Activated naive CD4-positive, alpha-beta T cell treated with anti-CD3 and anti-CD28 coated beads for 36 hours (primary cell): ENCODE measurements at regions of chr11 and their contacts with region 1.

Region 1: GRCh38 chr11:111601979-111602864 is at the start of gene SIK2:
- DNase-seq: peak; percentile 91
- H3K4me3 Mint-ChIP-seq: peak within 1 kb of the TSS; percentile 78
- H3K27ac Mint-ChIP-seq: peak within 1 kb of the TSS; percentile 83
- H3K4me1 Mint-ChIP-seq: peaks cover 24% of the 10 kb centered on the region
- H3K27me3 Mint-ChIP-seq: no peaks in the 10 kb centered on the region
- total RNA-seq, gene SIK2: 3.5 to 3.8 TPM

Region 2: DNA sequence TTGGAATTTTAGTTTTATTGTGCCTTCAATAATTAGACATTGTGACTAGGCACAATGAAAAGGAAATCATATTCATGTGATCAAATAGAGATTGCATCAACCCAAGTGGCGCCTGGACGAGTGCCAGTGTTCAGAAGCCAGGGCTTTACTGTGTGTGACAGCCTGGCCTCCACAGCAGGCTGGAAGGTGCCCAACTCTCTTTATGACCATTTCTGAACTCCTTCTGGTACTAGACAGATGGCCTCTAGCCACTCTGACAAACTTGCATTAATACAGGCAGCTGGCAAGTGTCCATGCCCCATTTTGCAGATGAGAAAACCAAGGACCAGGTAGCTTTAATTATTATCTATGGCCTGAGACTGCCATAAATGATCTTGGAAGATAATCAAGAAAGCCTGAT is 214.9 kb before region 1 on chr11:
- CTCF ChIA-PET with region 1: no interaction called
- intact Hi-C with region 1: no loop called
- DNase-seq: no peak
- H3K4me3 Mint-ChIP-seq: no peak overlapping the region
- H3K27ac Mint-ChIP-seq: no peak overlapping the region
- H3K4me1 Mint-ChIP-seq: peaks cover 12% of the 10 kb centered on the region
- H3K27me3 Mint-ChIP-seq: no peaks in the 10 kb centered on the region

Region 3: DNA sequence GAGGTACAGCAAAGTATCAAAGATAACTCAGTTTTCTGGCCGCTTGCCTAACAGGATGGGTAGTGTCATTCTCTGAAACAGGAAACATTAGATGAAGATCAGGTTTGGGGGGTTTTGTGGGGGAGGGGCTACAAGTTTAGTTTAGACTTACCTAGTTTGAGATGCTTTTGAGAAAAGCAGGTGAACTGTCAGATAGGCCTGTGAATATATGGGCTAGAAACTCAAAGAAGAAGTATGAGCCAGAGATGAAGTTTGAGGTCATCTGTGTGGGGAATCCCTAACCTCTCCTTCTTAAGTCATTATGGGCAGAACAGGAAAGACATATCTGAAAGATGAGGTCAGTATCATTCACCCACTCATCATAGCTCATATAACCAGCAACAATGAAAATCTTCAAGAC is 75.7 kb before region 1 on chr11:
- CTCF ChIA-PET with region 1: no interaction called
- intact Hi-C with region 1: loop called (anchors 1 kb)
- DNase-seq: peak; percentile 81
- H3K4me3 Mint-ChIP-seq: no peak overlapping the region
- H3K27ac Mint-ChIP-seq: peak overlapping the region; percentile 67
- H3K4me1 Mint-ChIP-seq: peaks cover 72% of the 10 kb centered on the region
- H3K27me3 Mint-ChIP-seq: peaks cover 3% of the 10 kb centered on the region

Region 4: GRCh38 chr11:111574373-111575225 is 27.6 kb before region 1 on chr11:
- CTCF ChIA-PET with region 1: no interaction called
- intact Hi-C with region 1: no loop called
- DNase-seq: peak; percentile 12
- H3K4me3 Mint-ChIP-seq: peak overlapping the region; percentile 30
- H3K27ac Mint-ChIP-seq: no peak overlapping the region
- H3K4me1 Mint-ChIP-seq: no peaks in the 10 kb centered on the region
- H3K27me3 Mint-ChIP-seq: no peaks in the 10 kb centered on the region

Region 5: GRCh38 chr11:111766093-111766833 is 164.0 kb after region 1 on chr11 and contains the start of gene PPP2R1B:
- CTCF ChIA-PET with region 1: interaction called, 15 read pairs
- intact Hi-C with region 1: loop called (anchors 1 kb)
- DNase-seq: peak; percentile 78
- H3K4me3 Mint-ChIP-seq: peak within 1 kb of the TSS; percentile 100
- H3K27ac Mint-ChIP-seq: peak within 1 kb of the TSS; percentile 96
- H3K4me1 Mint-ChIP-seq: peaks cover 33% of the 10 kb centered on the region
- H3K27me3 Mint-ChIP-seq: no peaks in the 10 kb centered on the region
- total RNA-seq, gene PPP2R1B: 36.7 to 43.8 TPM

Region 6: GRCh38 chr11:111841370-111842053 is 239.3 kb after region 1 on chr11:
- CTCF ChIA-PET with region 1: interaction called, 3 read pairs
- intact Hi-C with region 1: loop called (anchors 1 kb)
- DNase-seq: peak; percentile 96
- H3K4me3 Mint-ChIP-seq: no peak overlapping the region
- H3K27ac Mint-ChIP-seq: no peak overlapping the region
- H3K4me1 Mint-ChIP-seq: no peaks in the 10 kb centered on the region
- H3K27me3 Mint-ChIP-seq: no peaks in the 10 kb centered on the region

Region 7: DNA sequence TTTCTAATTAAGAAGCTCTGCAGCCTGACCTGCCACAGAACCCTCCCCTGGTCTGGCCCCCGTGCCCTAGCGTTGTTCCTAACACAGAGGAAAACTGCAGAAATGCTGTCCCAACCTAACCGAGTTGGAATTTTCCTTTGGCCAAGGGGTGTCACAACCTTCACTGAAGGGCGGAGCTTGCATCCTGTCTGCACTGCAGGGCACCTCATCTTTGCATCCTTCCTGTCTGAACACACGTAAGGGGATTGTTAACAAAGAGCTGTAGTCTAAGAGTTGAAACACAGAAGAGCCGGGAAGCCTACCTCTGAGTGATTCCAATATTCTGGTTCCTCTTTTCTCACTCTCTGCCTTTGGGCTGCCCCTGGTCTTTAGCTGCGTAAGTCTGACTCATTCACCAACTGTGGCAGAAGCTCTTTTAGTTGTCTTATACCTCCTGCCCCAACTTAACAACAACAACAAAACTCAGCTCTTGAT is 336.5 kb after region 1 on chr11:
- CTCF ChIA-PET with region 1: no interaction called
- intact Hi-C with region 1: loop called (anchors 2 kb)
- DNase-seq: peak; percentile 75
- H3K4me3 Mint-ChIP-seq: peak overlapping the region; percentile 76
- H3K27ac Mint-ChIP-seq: peak overlapping the region; percentile 84
- H3K4me1 Mint-ChIP-seq: peaks cover 43% of the 10 kb centered on the region
- H3K27me3 Mint-ChIP-seq: no peaks in the 10 kb centered on the region

Region 8: DNA sequence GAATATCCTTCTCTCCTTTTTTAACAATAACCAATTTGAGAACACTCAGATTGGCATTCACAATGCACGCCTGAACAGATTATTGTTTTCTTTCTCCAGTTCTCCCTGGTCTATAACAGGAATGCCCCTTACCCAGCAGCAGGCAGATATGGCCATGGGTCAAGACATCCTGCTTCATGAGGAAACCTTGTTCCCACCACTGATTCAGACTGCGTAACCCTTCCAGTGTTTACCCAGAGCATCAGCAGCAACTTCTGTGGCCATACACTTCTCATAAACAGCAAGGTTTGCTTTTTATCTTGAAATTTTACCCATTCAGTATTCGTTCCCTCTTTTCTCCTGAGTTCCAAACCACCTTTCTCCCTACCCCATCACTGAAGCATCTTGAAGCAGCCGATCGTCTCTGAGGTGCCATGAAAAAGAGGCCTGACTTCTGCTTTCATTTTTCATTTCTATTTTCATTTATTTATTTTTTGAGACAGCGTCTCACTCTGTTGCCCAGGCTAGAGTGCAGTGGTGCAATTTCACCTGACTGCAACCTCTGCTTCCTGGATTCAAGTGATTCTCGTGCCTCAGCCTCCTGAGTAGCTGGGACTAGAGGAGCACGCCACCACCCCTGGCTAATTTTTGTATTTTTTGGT is 633.6 kb after region 1 on chr11:
- CTCF ChIA-PET with region 1: no interaction called
- intact Hi-C with region 1: no loop called
- DNase-seq: no peak
- H3K4me3 Mint-ChIP-seq: no peak overlapping the region
- H3K27ac Mint-ChIP-seq: no peak overlapping the region
- H3K4me1 Mint-ChIP-seq: no peaks in the 10 kb centered on the region
- H3K27me3 Mint-ChIP-seq: no peaks in the 10 kb centered on the region

Region 9: GRCh38 chr11:112280268-112281126 is 678.3 kb after region 1 on chr11:
- CTCF ChIA-PET with region 1: no interaction called
- intact Hi-C with region 1: loop called (anchors 1 kb)
- DNase-seq: peak; percentile 79
- H3K4me3 Mint-ChIP-seq: peak overlapping the region; percentile 76
- H3K27ac Mint-ChIP-seq: no peak overlapping the region
- H3K4me1 Mint-ChIP-seq: peaks cover 2% of the 10 kb centered on the region
- H3K27me3 Mint-ChIP-seq: no peaks in the 10 kb centered on the region